ENCODE measurements at regions of chr1 and their contacts with region 1.

Region 1: DNA sequence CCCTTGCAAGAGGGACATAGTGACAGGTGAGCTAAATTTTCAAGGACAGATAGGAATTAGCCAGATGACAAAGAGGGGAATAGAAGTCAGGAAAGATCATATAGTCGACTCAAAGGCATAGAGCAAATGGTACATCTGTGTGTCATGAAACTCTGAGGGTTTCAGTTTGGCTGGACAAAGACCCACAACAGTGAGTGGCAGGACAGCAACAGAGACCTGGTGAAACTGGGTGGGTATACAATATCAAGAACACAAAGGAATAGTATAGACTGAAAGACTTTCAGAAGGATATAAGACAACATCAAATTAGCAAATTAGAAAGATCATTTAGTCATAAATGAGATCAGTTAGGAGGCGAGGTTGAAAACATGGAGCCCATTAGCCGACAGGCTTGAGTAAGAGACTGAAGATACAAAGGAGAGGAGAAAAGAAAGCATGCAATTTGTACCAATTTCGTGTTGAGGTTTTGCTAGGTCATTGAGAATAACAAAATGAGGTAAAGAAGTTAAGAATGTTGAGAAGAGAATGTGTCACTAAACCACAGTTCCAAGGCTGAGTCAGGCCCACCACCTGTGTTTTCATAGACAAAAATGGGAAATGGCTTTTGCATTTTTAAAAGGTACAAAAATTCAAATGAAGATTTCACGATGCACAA is 213.8 kb downstream of the HHIPL2 start:
- DNase-seq: peak; percentile 85
- ATAC-seq: no peak
- H3K4me3 ChIP-seq: no peak overlapping the region
- H3K27ac ChIP-seq: no peak overlapping the region
- H3K4me1 ChIP-seq: peaks cover 13% of the 10 kb centered on the region
- H3K27me3 ChIP-seq: no peaks in the 10 kb centered on the region
- CTCF ChIP-seq: no peak
- POLR2A ChIP-seq: no peak
- RAD21 ChIP-seq: no peak

Region 2: DNA sequence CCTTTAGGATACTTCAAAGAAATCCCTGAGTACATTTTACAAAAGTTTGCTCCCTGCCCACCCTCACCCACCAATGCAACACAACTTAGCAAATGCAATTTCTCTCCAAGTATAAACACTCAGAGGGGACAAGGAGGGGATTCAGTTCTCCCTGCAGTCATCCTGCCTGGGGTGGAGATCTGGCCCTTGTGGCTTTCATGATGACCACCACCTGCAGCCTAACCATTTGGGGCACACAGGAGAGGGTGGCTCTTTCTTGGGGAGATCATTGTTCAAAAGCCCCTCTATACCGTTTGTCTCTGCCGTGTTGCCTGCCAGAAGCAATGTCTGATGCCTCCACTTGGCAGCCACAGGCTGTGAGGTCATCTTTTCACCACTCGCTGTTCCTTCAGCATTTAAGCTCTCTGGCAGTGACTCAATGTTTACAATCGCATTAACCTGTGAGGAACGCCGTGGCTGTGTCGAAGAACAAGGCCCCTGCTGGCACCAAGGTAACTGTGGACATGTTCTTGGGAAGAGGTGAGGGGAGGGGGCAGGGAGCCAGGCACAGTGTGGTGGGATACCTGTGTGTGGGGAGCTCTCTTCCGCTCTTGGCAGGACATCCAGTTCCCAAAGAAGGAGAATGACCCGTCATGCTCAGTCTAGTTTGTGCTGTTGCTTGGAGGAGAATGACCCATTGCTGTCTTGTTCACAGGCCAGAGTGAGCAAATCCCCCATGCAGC is 488.3 kb before region 1 on chr1:
- CTCF ChIA-PET with region 1: no interaction called
- POLR2A ChIA-PET with region 1: no interaction called
- dilution Hi-C with region 1: no loop called
- in situ Hi-C with region 1: no loop called
- intact Hi-C with region 1: no loop called
- DNase-seq: peak; percentile 94
- ATAC-seq: peak; percentile 82
- H3K4me3 ChIP-seq: no peak overlapping the region
- H3K27ac ChIP-seq: peak overlapping the region; percentile 28; the same call in 1 of the 2 replicates
- H3K4me1 ChIP-seq: peaks cover 17% of the 10 kb centered on the region
- H3K27me3 ChIP-seq: no peaks in the 10 kb centered on the region
- CTCF ChIP-seq: no peak
- POLR2A ChIP-seq: no peak
- RAD21 ChIP-seq: peak; percentile 32; the same call in 1 of the 2 replicates

Region 3: DNA sequence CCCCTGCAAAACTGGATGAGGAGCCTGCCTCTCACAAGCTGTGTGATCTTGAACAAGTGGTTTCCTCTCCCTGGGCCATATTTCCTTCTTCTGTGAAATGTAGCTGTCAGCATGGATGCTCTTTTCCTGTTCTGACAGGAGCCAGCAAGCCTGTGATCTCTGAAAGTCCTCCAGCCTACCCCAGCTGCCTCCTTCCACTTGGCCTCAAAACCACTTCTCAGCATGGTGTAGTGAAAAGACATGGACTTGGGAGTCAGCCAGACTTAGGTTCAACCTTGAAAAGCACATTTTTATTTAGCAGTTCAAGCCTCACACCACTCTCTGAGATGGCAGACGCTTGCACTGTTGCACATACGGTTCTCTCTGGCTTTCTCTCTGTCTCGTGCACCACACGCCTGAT is 299.4 kb before region 1 on chr1:
- CTCF ChIA-PET with region 1: no interaction called
- POLR2A ChIA-PET with region 1: no interaction called
- dilution Hi-C with region 1: no loop called
- in situ Hi-C with region 1: no loop called
- intact Hi-C with region 1: no loop called
- DNase-seq: no peak
- ATAC-seq: no peak
- H3K4me3 ChIP-seq: no peak overlapping the region
- H3K27ac ChIP-seq: no peak overlapping the region
- H3K4me1 ChIP-seq: peaks cover 5% of the 10 kb centered on the region
- H3K27me3 ChIP-seq: no peaks in the 10 kb centered on the region
- CTCF ChIP-seq: no peak
- POLR2A ChIP-seq: no peak
- RAD21 ChIP-seq: no peak

Region 4: GRCh38 chr1:222283147-222283768 is 50.9 kb before region 1 on chr1:
- CTCF ChIA-PET with region 1: no interaction called
- POLR2A ChIA-PET with region 1: no interaction called
- dilution Hi-C with region 1: no loop called
- in situ Hi-C with region 1: no loop called
- intact Hi-C with region 1: loop called (anchors 2 kb)
- DNase-seq: peak; percentile 99
- ATAC-seq: peak; percentile 91
- H3K4me3 ChIP-seq: no peak overlapping the region
- H3K27ac ChIP-seq: peak overlapping the region; percentile 94
- H3K4me1 ChIP-seq: peaks cover 19% of the 10 kb centered on the region
- H3K27me3 ChIP-seq: no peaks in the 10 kb centered on the region
- CTCF ChIP-seq: 0 out of 2 replicates have a peak, but pooled peaks have one; percentile 0
- POLR2A ChIP-seq: no peak
- RAD21 ChIP-seq: no peak

Region 5: DNA sequence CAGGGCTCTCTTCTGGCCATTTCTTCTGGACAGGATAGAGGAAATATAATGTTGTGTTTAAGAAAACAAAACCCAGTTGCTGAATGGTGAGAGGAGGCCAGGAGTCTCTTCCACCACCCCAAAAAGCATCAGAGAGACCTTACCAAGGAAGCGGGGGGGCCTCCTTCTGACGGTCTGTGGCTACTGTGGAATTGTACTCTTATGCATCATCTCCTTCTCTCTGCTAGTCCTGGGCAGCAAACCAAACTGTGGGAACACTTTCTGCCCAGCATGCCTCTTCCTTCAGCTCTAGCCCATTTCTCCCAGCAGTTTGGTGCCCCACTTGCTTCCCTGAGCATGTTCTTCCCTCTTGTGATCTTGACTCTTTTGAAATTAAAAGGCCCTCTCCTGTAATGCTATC is 56.0 kb after region 1 on chr1:
- CTCF ChIA-PET with region 1: no interaction called
- POLR2A ChIA-PET with region 1: no interaction called
- dilution Hi-C with region 1: no loop called
- in situ Hi-C with region 1: loop called (anchors 10 kb)
- intact Hi-C with region 1: no loop called
- DNase-seq: peak; percentile 82
- ATAC-seq: peak; percentile 76
- H3K4me3 ChIP-seq: no peak overlapping the region
- H3K27ac ChIP-seq: no peak overlapping the region
- H3K4me1 ChIP-seq: peaks cover 5% of the 10 kb centered on the region
- H3K27me3 ChIP-seq: no peaks in the 10 kb centered on the region
- CTCF ChIP-seq: 0 out of 2 replicates have a peak, but pooled peaks have one; percentile 10
- POLR2A ChIP-seq: no peak
- RAD21 ChIP-seq: peak; percentile 25; the same call in 1 of the 2 replicates